Esophagus squamous epithelium (tissue), 5 donors: ENCODE measurements at regions of chr1 and their contacts with region 1.

Region 1: DNA sequence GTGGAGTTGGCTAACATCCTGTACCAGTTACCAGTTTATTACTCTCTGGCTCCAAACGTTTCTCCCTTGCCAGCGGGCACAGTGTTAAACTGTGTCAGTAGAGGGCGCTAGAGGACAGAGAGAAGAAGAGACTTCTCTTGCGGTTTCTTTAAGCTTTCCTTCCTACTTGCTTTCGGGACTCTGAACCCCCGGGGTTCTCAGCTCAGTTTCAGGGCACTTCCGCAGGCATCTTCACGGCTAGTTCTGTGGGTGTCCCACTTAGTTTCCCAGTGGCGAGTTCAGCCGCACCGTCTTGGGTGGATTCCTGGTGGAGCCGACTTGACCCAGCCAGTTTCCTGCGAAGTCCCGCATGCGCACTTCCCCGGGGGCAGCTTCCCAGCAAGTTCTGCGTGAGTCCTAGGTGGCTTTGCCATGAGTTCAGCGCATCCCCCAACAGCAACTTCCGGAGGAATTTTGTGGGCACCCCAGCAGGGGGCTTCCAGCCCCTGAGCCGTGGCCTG is 37.9 kb upstream of the BTG2 start:
- DNase-seq: no peak
- H3K4me3 ChIP-seq: peak overlapping the region; percentile 32 to 75 (median 57)
- H3K27ac ChIP-seq: peak overlapping the region; percentile 68 to 88 (median 82)
- H3K4me1 ChIP-seq: peaks cover 0 to 35% (median 6%) of the 10 kb centered on the region in 3 donors
- H3K27me3 ChIP-seq: no peaks in the 10 kb centered on the region
- CTCF ChIP-seq: peak; percentile 69 to 95 (median 93)
- POLR2A ChIP-seq: no peak

Region 2: GRCh38 chr1:203038891-203039608 is 228.3 kb before region 1 on chr1:
- intact Hi-C with region 1: loop called (anchors 10 kb)
- DNase-seq: no peak
- H3K4me3 ChIP-seq: no peak overlapping the region
- H3K27ac ChIP-seq: peak overlapping the region in 1 of 4 donors; percentile 39
- H3K4me1 ChIP-seq: peaks cover 0 to 9% (median 0%) of the 10 kb centered on the region in 3 donors
- H3K27me3 ChIP-seq: peaks cover 0 to 23% (median 0%) of the 10 kb centered on the region in 4 donors
- CTCF ChIP-seq: peak; percentile 52 to 92 (median 88)
- POLR2A ChIP-seq: no peak

Region 3: GRCh38 chr1:203166566-203166940 is 100.8 kb before region 1 on chr1:
- intact Hi-C with region 1: no loop called
- DNase-seq: no peak
- H3K4me3 ChIP-seq: no peak overlapping the region
- H3K27ac ChIP-seq: no peak overlapping the region
- H3K4me1 ChIP-seq: no peaks in the 10 kb centered on the region
- H3K27me3 ChIP-seq: peaks cover 0 to 26% (median 0%) of the 10 kb centered on the region in 4 donors
- CTCF ChIP-seq: peak in 2 of 6 experiments; percentile 4 to 57
- POLR2A ChIP-seq: no peak

Region 4: GRCh38 chr1:203428981-203429599 is 161.7 kb after region 1 on chr1:
- intact Hi-C with region 1: no loop called
- DNase-seq: no peak
- H3K4me3 ChIP-seq: no peak overlapping the region
- H3K27ac ChIP-seq: no peak overlapping the region
- H3K4me1 ChIP-seq: peaks cover 0 to 12% (median 0%) of the 10 kb centered on the region in 3 donors
- H3K27me3 ChIP-seq: peaks cover 0 to 40% (median 0%) of the 10 kb centered on the region in 4 donors
- CTCF ChIP-seq: no peak
- POLR2A ChIP-seq: no peak